Natural killer cell (primary cell): ENCODE measurements at regions of chr11 and their contacts with region 1.

Region 1: DNA sequence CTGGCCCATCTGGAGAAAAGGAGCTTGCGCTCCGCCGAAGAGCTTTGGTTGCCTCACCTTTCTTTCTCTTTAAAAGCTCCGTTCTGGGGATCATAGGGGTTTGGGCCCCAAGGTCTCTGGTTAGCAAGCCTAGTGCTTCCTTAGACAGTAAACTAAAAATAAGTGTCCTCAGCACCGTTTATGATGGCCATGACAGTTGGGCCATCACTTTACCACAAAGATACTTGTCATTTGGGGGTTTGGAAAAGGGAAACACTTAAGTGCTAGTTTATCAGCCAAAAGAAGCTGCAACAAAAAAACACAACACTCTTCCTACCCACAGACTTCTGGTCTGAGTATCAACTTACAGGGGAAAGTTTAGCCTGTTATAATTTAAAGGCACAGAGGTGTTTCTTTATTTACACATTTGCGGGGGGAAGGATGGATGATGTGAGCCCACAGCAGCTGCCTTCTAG is 88.4 kb upstream of the CD44 start:
- DNase-seq: peak; percentile 30 to 34
- ATAC-seq: peak; percentile 46 to 74 (median 73)
- H3K4me3 ChIP-seq: no peak overlapping the region
- H3K4me3 Mint-ChIP-seq: peak overlapping the region; percentile 85
- H3K27ac ChIP-seq: peak overlapping the region; percentile 82
- H3K27ac Mint-ChIP-seq: peak overlapping the region; percentile 96 to 98
- H3K4me1 ChIP-seq: peaks cover 49% of the 10 kb centered on the region
- H3K4me1 Mint-ChIP-seq: peaks cover 53 to 57% of the 10 kb centered on the region in 2 donors
- H3K27me3 ChIP-seq: no peaks in the 10 kb centered on the region
- H3K27me3 Mint-ChIP-seq: no peaks in the 10 kb centered on the region
- CTCF ChIP-seq: no peak

Region 2: GRCh38 chr11:35066783-35067423 is 16.3 kb after region 1 on chr11:
- intact Hi-C with region 1: loop called (anchors 1 kb)
- DNase-seq: peak in 1 of 2 donors; percentile 70
- ATAC-seq: peak; percentile 73 to 90 (median 84)
- H3K4me3 ChIP-seq: no peak overlapping the region
- H3K4me3 Mint-ChIP-seq: peak overlapping the region; percentile 73
- H3K27ac ChIP-seq: peak overlapping the region; percentile 38
- H3K27ac Mint-ChIP-seq: peak overlapping the region; percentile 81 to 84
- H3K4me1 ChIP-seq: peaks cover 25% of the 10 kb centered on the region
- H3K4me1 Mint-ChIP-seq: peaks cover 36 to 37% of the 10 kb centered on the region in 2 donors
- H3K27me3 ChIP-seq: no peaks in the 10 kb centered on the region
- H3K27me3 Mint-ChIP-seq: peaks cover 4 to 15% of the 10 kb centered on the region in 2 donors
- CTCF ChIP-seq: no peak